ENCODE measurements at regions of chr10 and their contacts with region 1.

Region 1: GRCh38 chr10:73529089-73529832 is 33.4 kb upstream of the PPP3CB start:
- DNase-seq: peak; percentile 75
- H3K4me3 ChIP-seq: no peak overlapping the region; a peak in 1 of 4 replicates
- H3K27ac ChIP-seq: no peak overlapping the region
- H3K4me1 ChIP-seq: no peaks in the 10 kb centered on the region
- H3K27me3 ChIP-seq: no peaks in the 10 kb centered on the region
- CTCF ChIP-seq: peak; percentile 91
- EP300 ChIP-seq: no peak
- RAD21 ChIP-seq: peak; percentile 95

Region 2: GRCh38 chr10:73246783-73247508 is 282.3 kb before region 1 on chr10 and contains the start of gene DNAJC9:
- CTCF ChIA-PET with region 1: no interaction called
- POLR2A ChIA-PET with region 1: no interaction called
- DNase-seq: peak; percentile 95
- H3K4me3 ChIP-seq: peak within 1 kb of the TSS; percentile 75 to 83
- H3K27ac ChIP-seq: peak within 1 kb of the TSS; percentile 80 to 87
- H3K4me1 ChIP-seq: peaks cover 29 to 31% of the 10 kb centered on the region in 2 experiments; a peak in 3 of 4 replicates
- H3K27me3 ChIP-seq: no peaks in the 10 kb centered on the region
- CTCF ChIP-seq: 0 out of 2 replicates have a peak, but pooled peaks have one; percentile 16
- EP300 ChIP-seq: 0 out of 4 replicates have a peak, but pooled peaks of 1 of the 2 experiments have one; percentile 34
- RAD21 ChIP-seq: no peak
- polyA plus RNA-seq, gene DNAJC9: 23.9 and 27.3 TPM in 2 replicates

Region 3: GRCh38 chr10:73467206-73467605 is 62.1 kb before region 1 on chr10:
- CTCF ChIA-PET with region 1: no interaction called
- POLR2A ChIA-PET with region 1: no interaction called
- DNase-seq: no peak
- H3K4me3 ChIP-seq: no peak overlapping the region
- H3K27ac ChIP-seq: no peak overlapping the region
- H3K4me1 ChIP-seq: peaks cover 0 to 5% of the 10 kb centered on the region in 2 experiments; a peak in 2 of 4 replicates
- H3K27me3 ChIP-seq: no peaks in the 10 kb centered on the region
- CTCF ChIP-seq: no peak
- EP300 ChIP-seq: no peak
- RAD21 ChIP-seq: no peak

Region 4: DNA sequence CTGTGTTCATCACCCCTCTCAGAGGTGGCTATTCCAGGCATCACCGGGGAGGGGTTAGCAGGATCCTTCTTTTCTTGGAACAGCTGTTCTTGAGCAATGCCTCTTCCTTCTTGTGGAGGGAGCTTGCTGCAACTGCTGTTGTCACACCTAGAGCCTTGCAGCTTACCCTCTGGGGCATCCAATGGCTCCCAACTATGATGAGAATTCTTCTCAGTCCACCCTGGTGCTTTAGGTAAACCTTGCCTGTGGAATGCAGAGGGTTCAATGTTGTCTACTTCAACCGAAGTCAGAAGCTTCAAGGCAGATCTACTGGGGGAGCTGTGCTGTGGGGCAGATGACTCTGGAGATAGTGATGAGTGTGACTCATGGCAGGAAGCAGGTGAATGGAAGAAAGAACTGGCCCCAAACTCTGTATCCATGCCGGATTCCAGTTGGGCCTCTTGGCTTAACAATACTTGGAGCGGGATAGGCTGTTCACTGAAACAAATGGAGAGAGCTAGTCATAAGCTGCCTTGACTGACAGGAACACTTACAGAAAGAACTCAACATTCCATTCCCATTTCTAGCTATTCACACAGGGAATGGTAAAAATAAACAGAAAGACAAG is 11.9 kb before region 1 on chr10:
- CTCF ChIA-PET with region 1: interaction called, 21 read pairs
- POLR2A ChIA-PET with region 1: no interaction called
- DNase-seq: no peak
- H3K4me3 ChIP-seq: no peak overlapping the region
- H3K27ac ChIP-seq: no peak overlapping the region
- H3K4me1 ChIP-seq: peaks cover 0 to 7% of the 10 kb centered on the region in 2 experiments; a peak in 1 of 4 replicates
- H3K27me3 ChIP-seq: no peaks in the 10 kb centered on the region
- CTCF ChIP-seq: no peak
- EP300 ChIP-seq: no peak
- RAD21 ChIP-seq: no peak

Region 5: DNA sequence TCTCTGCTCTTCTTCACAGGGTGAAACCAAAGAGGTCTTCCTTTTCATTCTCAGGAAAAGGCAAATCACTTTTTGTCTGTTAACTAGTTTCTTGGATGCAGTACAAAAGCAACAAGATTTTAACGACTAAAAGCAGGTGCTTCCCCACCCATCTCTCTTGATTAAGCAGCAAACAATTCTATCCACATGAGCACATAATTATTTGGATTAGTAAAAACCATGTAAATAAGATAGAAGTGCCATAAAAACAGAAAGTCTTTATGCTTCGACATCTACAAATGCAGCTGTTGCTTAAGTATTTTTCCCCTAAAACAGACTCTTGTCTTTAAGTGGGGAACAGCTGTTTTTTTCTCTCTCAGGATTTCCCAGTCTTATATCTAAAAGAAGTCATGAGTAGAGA is 24.5 kb after region 1 on chr10:
- CTCF ChIA-PET with region 1: interaction called, 10 read pairs
- POLR2A ChIA-PET with region 1: no interaction called
- DNase-seq: no peak
- H3K4me3 ChIP-seq: no peak overlapping the region
- H3K27ac ChIP-seq: no peak overlapping the region
- H3K4me1 ChIP-seq: no peaks in the 10 kb centered on the region
- H3K27me3 ChIP-seq: no peaks in the 10 kb centered on the region
- CTCF ChIP-seq: no peak
- EP300 ChIP-seq: no peak
- RAD21 ChIP-seq: no peak

Region 6: GRCh38 chr10:73625884-73626752 is 96.9 kb after region 1 on chr10:
- CTCF ChIA-PET with region 1: interaction called, 19 read pairs
- POLR2A ChIA-PET with region 1: no interaction called
- DNase-seq: peak; percentile 92
- H3K4me3 ChIP-seq: peak overlapping the region; percentile 72 to 93
- H3K27ac ChIP-seq: peak overlapping the region; percentile 85 to 90
- H3K4me1 ChIP-seq: peaks cover 0 to 4% of the 10 kb centered on the region in 2 experiments; a peak in 3 of 4 replicates
- H3K27me3 ChIP-seq: no peaks in the 10 kb centered on the region
- CTCF ChIP-seq: no peak
- EP300 ChIP-seq: no peak
- RAD21 ChIP-seq: no peak

Region 7: GRCh38 chr10:73644015-73644743 is 114.9 kb after region 1 on chr10:
- CTCF ChIA-PET with region 1: interaction called, 216 read pairs
- POLR2A ChIA-PET with region 1: no interaction called
- DNase-seq: peak; percentile 72
- H3K4me3 ChIP-seq: no peak overlapping the region; a peak in 1 of 4 replicates
- H3K27ac ChIP-seq: no peak overlapping the region
- H3K4me1 ChIP-seq: peaks cover 0 to 16% of the 10 kb centered on the region in 2 experiments; a peak in 1 of 4 replicates
- H3K27me3 ChIP-seq: no peaks in the 10 kb centered on the region
- CTCF ChIP-seq: peak; percentile 85
- EP300 ChIP-seq: no peak
- RAD21 ChIP-seq: peak; percentile 95